ENCODE measurements at regions of chr13 and their contacts with region 1.

Region 1: DNA sequence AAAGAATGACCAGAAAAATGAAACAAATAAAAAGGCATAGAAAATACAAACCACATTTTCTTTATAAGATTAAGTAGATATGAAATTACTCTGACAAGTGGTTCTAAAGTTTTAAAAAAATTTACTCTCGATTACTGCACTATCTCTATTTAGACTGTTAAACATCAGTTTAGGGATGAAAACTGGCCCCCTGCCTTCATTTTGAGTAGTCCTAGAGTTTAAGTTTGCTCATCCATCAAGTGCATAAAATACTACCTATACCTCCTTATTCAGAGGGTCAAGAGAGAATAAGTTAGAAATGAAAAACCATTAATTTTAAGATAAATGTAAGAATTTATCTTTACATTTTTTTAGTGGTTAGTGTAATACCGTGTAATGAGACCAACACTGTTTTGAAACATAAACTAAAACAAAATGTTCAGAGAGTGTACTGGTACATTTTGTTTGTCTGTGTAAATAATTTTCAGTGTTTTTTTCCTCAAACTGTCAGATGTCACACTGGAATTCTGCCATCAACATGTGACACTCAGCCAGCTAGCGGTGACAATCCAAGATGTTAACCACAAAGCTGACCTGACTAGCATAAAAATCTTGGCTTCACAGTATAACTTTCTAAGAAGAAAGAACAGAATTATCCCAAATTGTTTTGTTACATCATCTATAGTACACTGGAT is 184.8 kb upstream of the PCDH20 start:
- DNase-seq: no peak
- H3K4me3 ChIP-seq: no peak overlapping the region
- H3K4me3 Mint-ChIP-seq: no peak overlapping the region
- H3K27ac Mint-ChIP-seq: no peak overlapping the region
- H3K4me1 ChIP-seq: no peaks in the 10 kb centered on the region
- H3K4me1 Mint-ChIP-seq: no peaks in the 10 kb centered on the region
- H3K27me3 ChIP-seq: no peaks in the 10 kb centered on the region
- H3K27me3 Mint-ChIP-seq: no peaks in the 10 kb centered on the region
- CTCF ChIP-seq: no peak

Region 2: DNA sequence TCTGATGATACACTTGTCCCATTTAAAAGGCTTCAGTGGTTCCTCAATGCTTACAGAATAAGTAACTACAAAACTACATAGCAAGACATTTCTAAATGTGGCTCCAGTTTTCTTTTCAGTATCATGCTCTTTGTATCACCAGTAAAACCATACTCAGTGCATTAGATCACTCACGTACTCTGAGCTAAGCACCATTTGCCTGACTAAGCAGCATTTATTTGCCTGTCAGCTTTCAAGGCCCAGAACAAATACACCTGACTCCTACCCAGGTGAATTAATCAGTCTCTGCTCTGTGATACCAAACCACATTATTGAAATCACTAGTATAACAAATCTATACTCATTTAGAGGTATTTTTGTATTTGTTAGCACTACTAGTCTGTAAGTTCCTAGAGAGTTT is 137.5 kb before region 1 on chr13:
- CTCF ChIA-PET with region 1: no interaction called
- POLR2A ChIA-PET with region 1: no interaction called
- intact Hi-C with region 1: no loop called
- DNase-seq: no peak
- H3K4me3 ChIP-seq: no peak overlapping the region
- H3K4me3 Mint-ChIP-seq: no peak overlapping the region
- H3K27ac Mint-ChIP-seq: no peak overlapping the region
- H3K4me1 ChIP-seq: no peaks in the 10 kb centered on the region
- H3K4me1 Mint-ChIP-seq: no peaks in the 10 kb centered on the region
- H3K27me3 ChIP-seq: no peaks in the 10 kb centered on the region
- H3K27me3 Mint-ChIP-seq: peaks cover 2% of the 10 kb centered on the region
- CTCF ChIP-seq: no peak

Region 3: DNA sequence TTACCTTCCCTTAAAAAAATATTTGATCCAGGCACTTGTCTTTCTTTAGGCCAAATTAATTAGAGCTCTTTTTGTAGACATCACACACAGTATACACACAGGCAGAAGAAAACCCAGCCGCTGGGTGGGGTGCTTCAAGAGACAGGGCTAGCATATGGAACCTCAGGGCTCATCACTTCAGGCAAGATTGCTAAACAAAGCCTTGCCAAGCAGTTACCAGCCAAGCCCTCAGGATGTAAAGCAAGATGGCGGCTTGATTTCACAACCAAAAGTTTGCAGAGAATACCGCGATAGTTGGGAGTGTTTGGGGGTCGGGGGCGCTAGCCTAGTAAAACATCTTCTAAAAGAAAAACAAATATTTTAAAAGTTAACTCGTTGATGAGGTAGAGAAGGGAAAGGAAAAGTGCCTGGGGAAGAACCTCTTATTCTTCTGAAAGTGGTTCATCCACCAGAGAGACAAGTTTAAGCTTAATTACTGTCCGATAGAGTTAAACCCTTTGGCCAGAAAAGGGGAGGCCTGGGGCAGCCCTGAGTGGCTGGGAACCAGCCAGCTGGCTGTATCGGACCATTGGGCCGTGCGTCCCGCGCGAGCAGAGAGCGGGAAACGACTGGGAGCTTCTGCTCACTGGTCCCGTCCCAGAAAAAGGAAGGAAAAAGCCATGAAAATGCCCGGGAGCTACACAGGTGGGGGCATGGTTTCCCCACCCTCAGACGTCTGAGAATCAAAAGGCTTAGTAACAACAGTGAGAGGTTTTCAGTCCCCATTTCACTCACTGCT is 70.1 kb after region 1 on chr13:
- CTCF ChIA-PET with region 1: no interaction called
- POLR2A ChIA-PET with region 1: no interaction called
- intact Hi-C with region 1: loop called (anchors 2 kb)
- DNase-seq: no peak
- H3K4me3 ChIP-seq: no peak overlapping the region
- H3K4me3 Mint-ChIP-seq: no peak overlapping the region
- H3K27ac Mint-ChIP-seq: no peak overlapping the region
- H3K4me1 ChIP-seq: peaks cover 5% of the 10 kb centered on the region; the same call in 1 of the 2 replicates
- H3K4me1 Mint-ChIP-seq: peaks cover 4% of the 10 kb centered on the region
- H3K27me3 ChIP-seq: no peaks in the 10 kb centered on the region
- H3K27me3 Mint-ChIP-seq: no peaks in the 10 kb centered on the region
- CTCF ChIP-seq: no peak